ENCODE measurements at regions of chr11 and their contacts with region 1.

Region 1: GRCh38 chr11:120281143-120281795 is 41.3 kb downstream of the POU2F3 start:
- DNase-seq: no peak
- ATAC-seq: no peak
- H3K4me3 ChIP-seq: no peak overlapping the region
- H3K27ac ChIP-seq: no peak overlapping the region
- H3K4me1 ChIP-seq: no peaks in the 10 kb centered on the region
- H3K27me3 ChIP-seq: no peaks in the 10 kb centered on the region
- CTCF ChIP-seq: no peak

Region 2: DNA sequence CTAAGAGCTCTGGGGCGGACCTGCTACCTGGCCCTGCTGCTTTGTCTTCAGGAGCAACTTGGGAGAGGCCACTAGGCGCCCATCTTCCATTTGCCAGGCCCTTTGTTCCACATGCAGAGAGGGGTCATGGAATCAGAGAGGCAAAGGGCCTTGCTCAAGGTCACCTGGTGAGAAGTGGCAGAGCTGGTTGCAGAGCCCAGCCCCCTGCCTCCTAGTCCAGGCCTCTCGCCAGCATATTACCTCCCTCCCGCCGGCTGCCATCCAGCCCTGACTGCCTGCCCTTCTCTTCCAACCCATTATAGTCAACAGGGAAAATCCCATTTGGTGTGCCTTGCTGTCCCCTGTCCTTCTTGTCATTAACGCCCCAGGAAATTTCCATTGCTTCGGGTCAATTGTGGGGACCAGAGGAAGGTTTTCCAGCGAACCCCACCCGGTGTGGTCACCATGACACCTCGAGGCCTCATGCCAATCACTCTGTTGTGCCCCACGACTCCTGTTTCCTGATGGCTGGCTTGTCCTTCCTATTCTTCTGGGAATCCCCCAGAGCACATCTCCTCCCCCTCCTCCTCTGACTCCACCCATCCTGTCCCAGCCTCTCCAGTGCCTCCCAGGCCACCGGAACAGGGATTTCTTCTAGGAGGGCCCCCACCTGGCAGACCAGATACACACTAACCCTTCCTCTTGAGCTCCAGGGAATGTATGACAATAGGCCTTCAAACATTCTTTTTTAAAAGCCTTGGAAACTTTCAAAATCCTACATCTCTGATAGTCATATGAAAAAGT is 629.3 kb before region 1 on chr11:
- intact Hi-C with region 1: loop called in 1 of 2 experiments (anchors 10 kb)
- DNase-seq: no peak
- ATAC-seq: no peak
- H3K4me3 ChIP-seq: no peak overlapping the region
- H3K27ac ChIP-seq: no peak overlapping the region
- H3K4me1 ChIP-seq: no peaks in the 10 kb centered on the region
- H3K27me3 ChIP-seq: peaks cover 0 to 3% (median 0%) of the 10 kb centered on the region in 3 donors
- CTCF ChIP-seq: no peak

Region 3: DNA sequence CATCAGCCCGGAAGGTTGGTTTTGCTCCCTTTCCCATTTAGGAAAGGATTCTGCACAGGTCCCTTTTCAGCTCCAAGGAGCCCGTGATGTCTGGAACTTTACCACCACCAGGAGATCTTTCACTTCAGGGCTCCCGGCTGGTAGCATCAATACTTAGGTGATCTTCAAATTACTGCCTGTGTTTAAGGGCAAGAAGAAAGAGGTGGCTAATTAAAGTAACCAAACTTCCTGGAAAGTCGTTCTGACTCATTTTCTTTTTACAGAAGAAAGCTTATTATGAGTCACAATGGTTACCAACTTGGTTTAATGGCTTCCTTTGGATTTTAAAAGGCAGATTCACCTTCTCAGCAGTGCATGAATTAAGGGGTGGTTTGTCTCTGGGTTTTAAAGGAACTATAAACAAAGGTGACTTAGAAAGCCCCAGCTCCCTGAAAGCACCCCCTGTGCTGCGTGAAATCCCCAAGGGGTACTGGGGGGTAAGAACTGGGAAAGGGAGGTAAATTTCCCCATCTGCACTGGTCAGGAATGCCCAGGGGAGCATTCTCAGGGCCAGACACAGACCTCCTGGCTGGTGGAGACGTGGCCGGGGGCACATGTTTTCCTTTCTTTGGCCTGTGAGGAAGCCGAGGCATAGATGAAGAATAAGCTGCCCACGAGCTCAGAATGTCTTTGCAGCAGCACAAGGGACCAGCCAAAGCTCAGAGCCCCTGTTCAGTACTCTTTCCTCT is 32.6 kb before region 1 on chr11:
- intact Hi-C with region 1: no loop called
- DNase-seq: no peak
- ATAC-seq: no peak
- H3K4me3 ChIP-seq: no peak overlapping the region
- H3K27ac ChIP-seq: no peak overlapping the region
- H3K4me1 ChIP-seq: no peaks in the 10 kb centered on the region
- H3K27me3 ChIP-seq: peaks cover 0 to 57% (median 4%) of the 10 kb centered on the region in 3 donors
- CTCF ChIP-seq: no peak

Region 4: GRCh38 chr11:120335908-120336640 is 54.8 kb after region 1 on chr11 and contains the start of gene ARHGEF12:
- intact Hi-C with region 1: no loop called
- DNase-seq: peak; percentile 98 to 99
- ATAC-seq: peak; percentile 83 to 89 (median 84)
- H3K4me3 ChIP-seq: peak within 1 kb of the TSS; percentile 96
- H3K27ac ChIP-seq: peak within 1 kb of the TSS; percentile 98
- H3K4me1 ChIP-seq: peaks cover 33% of the 10 kb centered on the region
- H3K27me3 ChIP-seq: no peaks in the 10 kb centered on the region
- CTCF ChIP-seq: peak; percentile 18
- total RNA-seq, gene ARHGEF12: 45.6 to 102 (median 76.1) TPM

Region 5: GRCh38 chr11:120385110-120385509 is 103.8 kb after region 1 on chr11:
- intact Hi-C with region 1: no loop called
- DNase-seq: no peak
- ATAC-seq: no peak
- H3K4me3 ChIP-seq: no peak overlapping the region
- H3K27ac ChIP-seq: no peak overlapping the region
- H3K4me1 ChIP-seq: peaks cover 74% of the 10 kb centered on the region
- H3K27me3 ChIP-seq: no peaks in the 10 kb centered on the region
- CTCF ChIP-seq: no peak

Measured in psoas muscle (tissue), 8 donors.